MCF 10A (cell line): ENCODE measurements at regions of chr16 and their contacts with region 1.

Region 1: GRCh38 chr16:31440516-31441184 is 1.9 kb downstream of the ZNF843 start:
- DNase-seq: no peak
- H3K4me3 Mint-ChIP-seq: no peak overlapping the region
- H3K27ac Mint-ChIP-seq: no peak overlapping the region
- H3K4me1 Mint-ChIP-seq: peaks cover 12% of the 10 kb centered on the region
- H3K27me3 Mint-ChIP-seq: no peaks in the 10 kb centered on the region
- CTCF ChIP-seq: no peak

Region 2: DNA sequence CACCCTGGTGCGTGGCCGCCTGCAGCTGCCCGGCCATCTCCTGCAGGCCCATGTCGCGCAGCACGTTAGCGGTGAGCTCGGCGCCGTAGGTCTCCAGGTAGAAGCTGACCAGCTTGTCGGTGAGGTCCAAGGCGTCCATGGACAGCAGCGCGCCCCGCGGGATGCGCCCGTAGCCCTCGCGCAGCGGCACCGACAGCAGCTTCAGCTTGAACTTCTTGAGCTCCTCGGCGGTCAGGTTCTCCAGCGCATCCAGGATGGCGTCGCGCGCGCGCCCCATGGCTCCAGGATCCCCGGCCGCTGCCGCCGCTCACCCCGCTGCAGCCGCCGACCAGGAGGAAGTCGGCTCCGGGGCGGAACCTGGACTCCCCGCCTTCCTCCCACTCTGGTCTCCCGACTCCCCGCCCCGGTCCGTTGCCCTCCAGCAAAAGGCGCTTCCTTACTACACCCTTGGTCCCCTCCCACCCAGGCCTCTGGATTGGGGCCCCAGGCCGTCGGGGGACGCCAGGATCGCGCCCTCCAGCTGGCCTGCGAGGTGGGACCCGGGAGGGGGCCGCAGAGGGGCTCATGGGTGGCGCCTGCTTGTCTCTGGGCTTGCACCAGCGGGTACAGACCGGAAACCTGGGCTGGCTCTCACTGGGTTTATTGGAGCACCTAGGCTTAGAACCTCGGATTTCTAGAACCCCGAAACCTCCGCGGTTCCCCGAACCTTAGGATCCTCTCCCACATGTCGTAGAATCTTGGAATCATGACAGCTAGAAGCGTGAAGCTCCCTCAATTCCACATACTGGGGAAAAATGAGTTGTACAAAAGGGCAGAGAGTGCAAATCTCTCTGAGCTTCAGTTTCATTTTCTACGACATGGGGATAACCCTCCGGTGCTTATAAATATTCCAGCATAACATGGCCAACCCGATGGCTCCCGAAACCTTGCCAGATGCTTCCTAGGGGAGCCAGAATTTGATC is 238.0 kb before region 1 on chr16 and contains the start of gene PYCARD:
- CTCF ChIA-PET with region 1: interaction called, 6 read pairs
- POLR2A ChIA-PET with region 1: no interaction called
- intact Hi-C with region 1: loop called (anchors 2 kb)
- DNase-seq: no peak
- H3K4me3 Mint-ChIP-seq: no peak within 1 kb of the TSS
- H3K27ac Mint-ChIP-seq: no peak within 1 kb of the TSS
- H3K4me1 Mint-ChIP-seq: peaks cover 12% of the 10 kb centered on the region
- H3K27me3 Mint-ChIP-seq: peaks cover 21% of the 10 kb centered on the region
- CTCF ChIP-seq: no peak
- total RNA-seq, gene PYCARD: 0.47 and 0.76 TPM in 2 replicates

Region 3: GRCh38 chr16:31382485-31383161 is 58.0 kb before region 1 on chr16:
- CTCF ChIA-PET with region 1: interaction called, 10 read pairs
- POLR2A ChIA-PET with region 1: no interaction called
- intact Hi-C with region 1: loop called (anchors 2 kb)
- DNase-seq: peak; percentile 60
- H3K4me3 Mint-ChIP-seq: no peak overlapping the region
- H3K27ac Mint-ChIP-seq: no peak overlapping the region
- H3K4me1 Mint-ChIP-seq: peaks cover 15% of the 10 kb centered on the region
- H3K27me3 Mint-ChIP-seq: no peaks in the 10 kb centered on the region
- CTCF ChIP-seq: peak; percentile 65

Region 4: GRCh38 chr16:31416371-31416770 is 24.3 kb before region 1 on chr16:
- CTCF ChIA-PET with region 1: no interaction called
- POLR2A ChIA-PET with region 1: no interaction called
- intact Hi-C with region 1: no loop called
- DNase-seq: no peak
- H3K4me3 Mint-ChIP-seq: no peak overlapping the region
- H3K27ac Mint-ChIP-seq: no peak overlapping the region
- H3K4me1 Mint-ChIP-seq: no peaks in the 10 kb centered on the region
- H3K27me3 Mint-ChIP-seq: peaks cover 46% of the 10 kb centered on the region
- CTCF ChIP-seq: no peak

Region 5: GRCh38 chr16:31428638-31429247 is 11.9 kb before region 1 on chr16:
- CTCF ChIA-PET with region 1: interaction called, 28 read pairs
- POLR2A ChIA-PET with region 1: interaction called, 5 read pairs
- intact Hi-C with region 1: no loop called
- DNase-seq: peak; percentile 34
- H3K4me3 Mint-ChIP-seq: no peak overlapping the region
- H3K27ac Mint-ChIP-seq: no peak overlapping the region
- H3K4me1 Mint-ChIP-seq: no peaks in the 10 kb centered on the region
- H3K27me3 Mint-ChIP-seq: no peaks in the 10 kb centered on the region
- CTCF ChIP-seq: no peak

Region 6: DNA sequence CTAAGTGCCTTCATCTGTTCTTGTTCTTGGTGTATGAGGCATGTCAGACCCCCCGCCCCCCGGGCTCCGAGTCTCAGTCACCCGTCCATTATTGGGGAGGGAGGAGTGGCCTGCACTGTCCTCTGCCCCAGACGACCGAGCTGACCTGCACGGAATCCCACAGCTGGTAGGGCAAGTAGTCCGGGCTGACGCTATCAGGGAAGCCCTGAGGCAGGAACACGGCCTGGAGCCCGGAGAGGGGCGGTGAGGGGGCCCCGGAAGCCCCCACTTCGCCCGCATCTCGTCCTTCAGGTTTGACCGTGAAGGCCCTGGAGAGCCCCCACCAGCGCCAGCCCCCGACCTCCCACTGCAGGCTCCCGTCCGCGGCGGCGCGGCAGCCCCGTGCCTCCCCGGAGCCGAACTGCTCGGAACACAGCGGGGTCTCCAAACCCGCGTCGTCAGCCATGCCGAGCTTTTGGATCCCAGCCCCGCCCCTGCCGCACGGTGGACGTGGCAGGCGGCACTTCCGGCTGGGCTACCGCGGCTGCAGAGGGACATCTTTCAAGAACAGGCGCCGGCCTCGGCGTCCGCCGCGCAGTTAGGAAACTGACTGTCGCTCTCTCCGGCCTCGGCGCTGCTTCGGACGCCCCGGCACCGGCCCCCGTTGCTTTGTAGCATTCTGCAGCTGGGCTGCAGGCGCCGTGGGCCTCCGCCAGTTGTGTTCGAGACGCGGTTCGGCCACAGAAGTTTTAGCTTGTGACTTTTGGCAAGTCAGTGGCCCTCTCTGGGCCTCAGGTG is 67.5 kb after region 1 on chr16 and contains the start of gene RUSF1:
- CTCF ChIA-PET with region 1: no interaction called
- POLR2A ChIA-PET with region 1: no interaction called
- intact Hi-C with region 1: no loop called
- DNase-seq: peak; percentile 84
- H3K4me3 Mint-ChIP-seq: peak within 1 kb of the TSS; percentile 88
- H3K27ac Mint-ChIP-seq: peak within 1 kb of the TSS; percentile 98
- H3K4me1 Mint-ChIP-seq: peaks cover 22% of the 10 kb centered on the region
- H3K27me3 Mint-ChIP-seq: no peaks in the 10 kb centered on the region
- CTCF ChIP-seq: no peak
- total RNA-seq, gene RUSF1: 72.0 and 88.8 TPM in 2 replicates

Region 7: DNA sequence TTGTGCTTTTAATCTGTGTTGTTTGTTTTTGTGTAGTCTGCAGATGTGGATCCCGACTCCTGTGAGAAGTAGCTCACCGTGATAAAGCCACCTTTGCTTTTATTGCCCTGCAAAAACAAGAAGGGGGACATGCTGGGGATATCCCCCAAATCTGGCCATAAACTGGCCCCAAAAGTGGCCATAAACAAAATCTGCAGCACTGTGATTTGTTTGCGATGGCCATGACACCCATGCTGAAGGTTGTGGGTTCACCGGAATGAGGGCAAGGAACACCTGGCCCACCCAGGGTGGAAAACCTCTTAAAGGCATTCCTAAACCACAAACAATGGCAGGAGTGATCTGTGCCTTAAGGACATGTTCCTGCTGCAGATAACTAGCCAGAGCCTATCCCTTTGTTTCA is 102.1 kb after region 1 on chr16:
- CTCF ChIA-PET with region 1: no interaction called
- POLR2A ChIA-PET with region 1: no interaction called
- intact Hi-C with region 1: no loop called
- DNase-seq: no peak
- H3K4me3 Mint-ChIP-seq: no peak overlapping the region
- H3K27ac Mint-ChIP-seq: no peak overlapping the region
- H3K4me1 Mint-ChIP-seq: no peaks in the 10 kb centered on the region
- H3K27me3 Mint-ChIP-seq: no peaks in the 10 kb centered on the region
- CTCF ChIP-seq: no peak